ENCODE measurements at regions of chr2 and their contacts with region 1.

Region 1: DNA sequence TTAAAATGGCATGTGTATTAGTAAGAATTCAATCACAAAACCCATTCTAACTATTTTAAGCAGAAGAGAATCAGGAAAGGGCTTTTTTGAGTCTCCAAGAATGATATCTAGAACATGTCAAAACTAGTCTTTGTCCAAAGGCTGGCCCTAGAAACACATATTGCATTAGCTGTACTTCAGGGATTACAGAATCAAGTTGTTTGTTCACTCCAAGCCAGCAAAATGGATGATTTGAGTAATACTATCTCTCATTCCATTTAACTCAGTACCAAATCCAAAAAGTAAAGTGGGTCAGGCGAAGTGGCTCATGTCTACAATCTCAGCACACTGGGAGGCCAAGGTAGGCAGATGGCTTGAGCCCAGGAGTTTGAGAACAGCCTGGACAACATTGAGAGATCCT is 41.3 kb downstream of the ATF2 start:
- DNase-seq: no peak
- ATAC-seq: peak in 1 of 8 donors; percentile 20
- H3K4me3 ChIP-seq: no peak overlapping the region
- H3K27ac ChIP-seq: no peak overlapping the region
- H3K4me1 ChIP-seq: peaks cover 0 to 11% (median 4%) of the 10 kb centered on the region in 9 donors
- H3K27me3 ChIP-seq: no peaks in the 10 kb centered on the region
- CTCF ChIP-seq: no peak

Region 2: GRCh38 chr2:174840436-174840835 is 286.2 kb before region 1 on chr2:
- intact Hi-C with region 1: no loop called
- DNase-seq: no peak
- ATAC-seq: no peak
- H3K4me3 ChIP-seq: no peak overlapping the region
- H3K27ac ChIP-seq: no peak overlapping the region
- H3K4me1 ChIP-seq: peaks cover 0 to 38% (median 22%) of the 10 kb centered on the region in 9 donors
- H3K27me3 ChIP-seq: no peaks in the 10 kb centered on the region
- CTCF ChIP-seq: no peak

Region 3: GRCh38 chr2:175080479-175080878 is 46.2 kb before region 1 on chr2:
- intact Hi-C with region 1: no loop called
- DNase-seq: no peak
- ATAC-seq: no peak
- H3K4me3 ChIP-seq: no peak overlapping the region
- H3K27ac ChIP-seq: no peak overlapping the region
- H3K4me1 ChIP-seq: no peaks in the 10 kb centered on the region
- H3K27me3 ChIP-seq: no peaks in the 10 kb centered on the region
- CTCF ChIP-seq: no peak

Region 4: GRCh38 chr2:175167792-175168563 is 41.3 kb after region 1 on chr2 and contains the start of gene ATF2:
- intact Hi-C with region 1: loop called in 2 of 10 experiments (anchors 5 to 10 kb)
- DNase-seq: peak; percentile 96 to 99
- ATAC-seq: peak; percentile 97 to 98 (median 98)
- H3K4me3 ChIP-seq: peak within 1 kb of the TSS; percentile 67 to 98 (median 88)
- H3K27ac ChIP-seq: peak within 1 kb of the TSS; percentile 77 to 98 (median 94)
- H3K4me1 ChIP-seq: peaks cover 0 to 38% (median 26%) of the 10 kb centered on the region in 9 donors
- H3K27me3 ChIP-seq: no peaks in the 10 kb centered on the region
- CTCF ChIP-seq: no peak
- total RNA-seq, gene ATF2: 23.3 to 39.8 (median 29.9) TPM

Region 5: DNA sequence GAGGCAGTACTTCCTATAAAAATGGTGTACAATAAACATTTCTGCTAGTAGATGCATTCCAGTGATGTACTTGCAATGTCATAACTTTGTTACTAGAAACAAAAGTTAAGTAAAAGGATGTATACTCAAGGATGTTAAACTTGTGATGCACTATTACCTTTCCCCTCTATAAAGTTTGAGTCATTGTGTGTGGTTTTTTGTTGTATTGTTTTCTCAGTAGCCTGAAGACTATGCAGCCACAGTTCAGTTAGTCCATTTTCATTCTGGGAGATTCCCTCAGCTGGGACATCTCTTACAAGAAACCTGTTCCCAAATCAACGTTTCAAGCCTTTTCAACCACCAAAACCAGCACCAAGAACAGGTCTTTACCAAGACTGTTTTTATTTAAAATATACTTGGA is 49.2 kb after region 1 on chr2:
- intact Hi-C with region 1: loop called in 2 of 10 experiments (anchors 5 to 10 kb)
- DNase-seq: no peak
- ATAC-seq: no peak
- H3K4me3 ChIP-seq: no peak overlapping the region
- H3K27ac ChIP-seq: no peak overlapping the region
- H3K4me1 ChIP-seq: peaks cover 0 to 60% (median 27%) of the 10 kb centered on the region in 9 donors
- H3K27me3 ChIP-seq: no peaks in the 10 kb centered on the region
- CTCF ChIP-seq: no peak

Region 6: DNA sequence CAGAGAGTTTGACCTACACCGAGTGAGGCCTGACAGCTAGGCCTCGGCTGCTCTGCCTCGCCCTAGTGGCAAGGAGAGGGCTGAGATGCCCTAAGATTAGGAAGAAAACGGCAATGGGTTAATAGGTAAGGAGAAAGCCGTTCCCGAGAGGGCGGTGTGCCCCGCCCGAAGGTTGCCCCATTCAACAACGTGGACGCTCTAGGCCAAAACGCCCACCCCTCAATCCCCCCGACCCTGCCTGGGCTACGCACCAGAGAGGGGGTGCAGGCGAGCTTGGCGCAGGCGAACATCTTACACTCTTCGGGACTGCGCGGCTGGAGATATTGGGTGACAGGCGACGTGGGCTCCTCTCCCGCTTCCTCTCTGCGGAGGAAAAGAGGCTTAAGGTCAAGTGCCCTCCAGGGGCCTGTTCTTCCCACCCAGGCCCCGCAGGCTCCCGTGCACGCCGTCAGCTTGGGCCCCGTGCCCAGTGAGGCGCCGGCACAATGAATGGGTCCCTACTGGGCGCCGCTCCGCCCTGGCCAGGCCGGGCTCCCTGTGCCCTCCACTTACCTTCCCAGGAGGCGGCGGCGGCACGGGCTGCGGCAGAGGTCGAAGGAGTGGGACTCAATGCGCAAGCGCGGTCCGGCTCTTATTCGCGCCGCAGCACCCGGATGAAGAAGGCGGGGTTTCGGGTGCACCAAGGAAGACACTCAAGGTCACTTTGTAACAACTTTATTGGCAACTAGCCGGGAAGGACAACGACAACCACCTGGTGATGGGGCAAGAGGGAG is 54.6 kb after region 1 on chr2 and contains the start of gene ATP5MC3:
- intact Hi-C with region 1: loop called in 2 of 10 experiments (anchors 5 to 10 kb)
- DNase-seq: peak; percentile 94 to 95
- ATAC-seq: peak; percentile 95 to 98 (median 97)
- H3K4me3 ChIP-seq: peak within 1 kb of the TSS; percentile 69 to 96 (median 89)
- H3K27ac ChIP-seq: peak within 1 kb of the TSS; percentile 94 to 98 (median 97)
- H3K4me1 ChIP-seq: peaks cover 0 to 47% (median 32%) of the 10 kb centered on the region in 9 donors
- H3K27me3 ChIP-seq: no peaks in the 10 kb centered on the region
- CTCF ChIP-seq: peak in 4 of 9 donors; percentile 9 to 31 (median 18)
- total RNA-seq, gene ATP5MC3: 813 to 1,522 (median 1,119) TPM